ENCODE measurements at regions of chr4 and their contacts with region 1.

Region 1: GRCh38 chr4:22410645-22411247 is 105.1 kb downstream of the ADGRA3 start:
- DNase-seq: no peak

Region 2: DNA sequence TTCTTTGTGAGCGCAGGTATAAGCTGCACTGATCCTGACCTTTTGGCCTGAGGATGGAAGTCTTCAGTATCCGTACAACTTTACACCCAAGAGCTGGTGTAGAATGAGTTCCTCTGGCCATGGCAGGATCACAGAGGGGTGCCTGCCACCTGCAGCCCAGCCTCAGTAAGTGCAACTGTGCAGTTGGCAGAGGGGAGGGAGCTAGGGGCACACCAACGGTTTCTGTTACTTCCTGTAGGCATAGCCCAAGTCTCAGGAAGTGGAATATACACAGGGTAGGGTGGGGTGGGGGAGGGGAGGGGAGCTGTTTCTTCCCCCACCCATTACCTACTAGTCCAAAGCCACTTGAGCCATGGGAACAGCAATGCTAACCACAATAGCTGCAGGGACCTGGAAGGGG is 196.6 kb after region 1 on chr4:
- intact Hi-C with region 1: loop called (anchors 5 kb)
- DNase-seq: no peak

Region 3: GRCh38 chr4:22688236-22688635 is 277.5 kb after region 1 on chr4:
- intact Hi-C with region 1: loop called (anchors 5 kb)
- DNase-seq: no peak